Natural killer cell (primary cell): ENCODE measurements at regions of chr14 and their contacts with region 1.

Region 1: GRCh38 chr14:91649930-91650329 is 82.0 kb downstream of the CATSPERB start:
- DNase-seq: peak in 1 of 2 donors; percentile 59
- ATAC-seq: peak in 1 of 3 donors; percentile 78
- H3K4me3 ChIP-seq: no peak overlapping the region
- H3K4me3 Mint-ChIP-seq: no peak overlapping the region
- H3K27ac ChIP-seq: no peak overlapping the region
- H3K27ac Mint-ChIP-seq: no peak overlapping the region
- H3K4me1 ChIP-seq: no peaks in the 10 kb centered on the region
- H3K4me1 Mint-ChIP-seq: no peaks in the 10 kb centered on the region
- H3K27me3 ChIP-seq: no peaks in the 10 kb centered on the region
- H3K27me3 Mint-ChIP-seq: peaks cover 0 to 4% of the 10 kb centered on the region in 2 donors
- CTCF ChIP-seq: peak; percentile 48

Region 2: DNA sequence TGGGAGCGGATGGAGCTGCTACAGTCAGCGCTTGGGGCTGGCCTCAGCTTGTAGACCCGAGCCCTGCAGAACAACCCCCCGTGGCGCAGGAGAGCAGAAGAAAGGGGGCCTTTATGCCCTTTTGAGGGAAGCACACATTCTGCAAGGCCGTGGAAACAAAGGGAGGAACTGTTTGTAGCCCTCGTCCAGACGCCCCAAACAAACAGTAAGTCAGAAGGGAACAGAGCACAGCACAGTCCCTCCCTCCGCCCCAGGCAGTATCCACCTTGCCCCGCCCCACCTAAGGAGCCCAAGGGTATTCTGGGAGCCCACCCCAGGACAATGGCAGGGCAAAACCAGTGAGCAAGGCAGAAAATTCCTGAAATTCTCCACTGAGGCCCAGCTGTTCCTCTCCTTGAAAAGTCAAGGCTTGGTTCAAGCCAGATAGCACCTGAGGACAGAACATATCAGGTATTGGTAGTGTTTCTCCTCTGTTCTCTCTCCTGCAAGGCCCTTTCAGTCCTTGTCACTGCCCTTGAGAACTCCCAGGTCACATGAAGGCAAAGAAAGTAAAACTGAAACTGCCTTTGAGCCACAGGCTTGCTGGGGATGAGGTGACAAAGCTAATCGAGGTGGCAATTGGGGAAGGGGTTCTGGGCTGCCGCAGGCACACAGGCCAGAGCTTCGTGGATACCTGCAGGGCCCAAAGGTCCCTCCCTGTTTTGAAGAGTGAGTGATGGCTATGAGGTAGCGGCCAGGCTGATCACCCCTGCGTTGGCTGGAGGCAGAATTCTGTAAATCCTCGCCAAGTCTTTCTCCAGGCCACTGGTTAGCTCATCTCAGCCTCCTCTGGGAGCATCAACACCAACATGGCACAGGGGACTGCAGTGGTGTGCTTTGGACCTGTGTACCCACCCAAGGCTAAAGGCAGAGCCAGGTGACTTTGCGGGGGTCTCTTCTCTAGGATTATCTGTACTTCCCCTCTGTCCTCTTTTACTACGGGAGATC is 535.6 kb before region 1 on chr14:
- intact Hi-C with region 1: no loop called
- DNase-seq: peak; percentile 57 to 86
- ATAC-seq: peak; percentile 77 to 85 (median 82)
- H3K4me3 ChIP-seq: peak overlapping the region; percentile 70
- H3K4me3 Mint-ChIP-seq: peak overlapping the region; percentile 91
- H3K27ac ChIP-seq: peak overlapping the region; percentile 94
- H3K27ac Mint-ChIP-seq: peak overlapping the region; percentile 96
- H3K4me1 ChIP-seq: peaks cover 49% of the 10 kb centered on the region
- H3K4me1 Mint-ChIP-seq: peaks cover 70 to 77% of the 10 kb centered on the region in 2 donors
- H3K27me3 ChIP-seq: no peaks in the 10 kb centered on the region
- H3K27me3 Mint-ChIP-seq: no peaks in the 10 kb centered on the region
- CTCF ChIP-seq: no peak

Region 3: GRCh38 chr14:91614187-91614586 is 35.7 kb before region 1 on chr14:
- intact Hi-C with region 1: no loop called
- DNase-seq: no peak
- ATAC-seq: no peak
- H3K4me3 ChIP-seq: no peak overlapping the region
- H3K4me3 Mint-ChIP-seq: no peak overlapping the region
- H3K27ac ChIP-seq: no peak overlapping the region
- H3K27ac Mint-ChIP-seq: no peak overlapping the region
- H3K4me1 ChIP-seq: no peaks in the 10 kb centered on the region
- H3K4me1 Mint-ChIP-seq: no peaks in the 10 kb centered on the region
- H3K27me3 ChIP-seq: no peaks in the 10 kb centered on the region
- H3K27me3 Mint-ChIP-seq: no peaks in the 10 kb centered on the region
- CTCF ChIP-seq: no peak

Region 4: DNA sequence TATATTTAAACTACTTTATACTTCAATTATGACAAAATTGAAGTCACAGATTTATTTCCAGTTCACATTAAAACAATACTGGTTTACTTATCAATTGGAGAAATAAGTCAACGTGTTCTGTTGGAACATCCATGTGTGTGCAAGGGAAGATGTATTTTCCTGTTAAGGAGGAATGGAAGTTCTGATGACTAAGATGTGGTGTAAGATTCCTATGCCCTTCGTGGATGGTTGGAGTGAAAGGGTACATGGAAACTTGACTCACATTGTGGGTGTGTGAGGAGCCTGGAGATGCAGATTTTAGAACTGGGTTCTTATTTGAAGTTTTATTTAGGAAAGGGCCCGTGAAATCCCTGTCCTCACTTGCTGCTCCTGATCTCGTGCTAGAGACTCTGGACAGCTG is 13.3 kb before region 1 on chr14:
- intact Hi-C with region 1: no loop called
- DNase-seq: no peak
- ATAC-seq: no peak
- H3K4me3 ChIP-seq: no peak overlapping the region
- H3K4me3 Mint-ChIP-seq: no peak overlapping the region
- H3K27ac ChIP-seq: no peak overlapping the region
- H3K27ac Mint-ChIP-seq: no peak overlapping the region
- H3K4me1 ChIP-seq: no peaks in the 10 kb centered on the region
- H3K4me1 Mint-ChIP-seq: no peaks in the 10 kb centered on the region
- H3K27me3 ChIP-seq: no peaks in the 10 kb centered on the region
- H3K27me3 Mint-ChIP-seq: peaks cover 0 to 3% of the 10 kb centered on the region in 2 donors
- CTCF ChIP-seq: no peak

Region 5: DNA sequence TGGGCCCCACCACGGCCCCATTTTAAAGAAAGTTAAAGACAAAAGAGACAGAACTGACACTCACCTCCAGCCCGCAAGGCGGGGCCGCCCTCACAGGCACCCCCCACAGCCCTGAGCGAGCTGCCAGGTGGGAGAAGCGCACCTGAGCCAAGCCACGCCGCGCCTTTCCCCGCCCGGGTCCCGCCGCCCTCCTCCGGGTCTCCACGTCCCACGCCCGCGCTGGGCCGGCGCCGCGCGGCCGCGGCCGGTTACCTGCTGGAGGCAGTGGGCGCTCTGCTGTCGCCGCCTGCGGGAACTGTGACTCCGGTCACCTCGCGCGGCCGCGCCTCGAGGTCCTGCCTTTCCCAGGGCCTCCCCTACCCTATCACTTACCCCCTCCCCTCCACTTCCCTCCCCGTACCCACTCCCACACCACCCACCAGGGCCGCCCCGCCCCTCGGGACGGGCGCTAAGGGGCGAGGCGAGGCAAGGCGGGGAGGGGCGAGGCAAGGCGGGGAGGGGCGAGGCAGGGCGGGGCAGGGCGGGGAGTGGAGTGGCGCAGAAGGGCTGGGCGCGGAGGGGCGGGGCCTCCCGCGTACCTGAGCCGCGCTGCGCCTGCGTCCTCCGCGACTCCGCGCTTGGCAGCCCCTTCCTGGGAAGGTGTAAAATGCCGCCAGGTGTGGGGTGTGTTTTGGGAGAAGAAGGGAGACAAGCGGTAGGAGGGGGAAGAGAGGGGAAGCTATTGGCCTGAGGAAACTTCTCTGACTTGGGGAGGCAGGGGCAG is 186.4 kb after region 1 on chr14:
- intact Hi-C with region 1: no loop called
- DNase-seq: peak; percentile 54 to 95
- ATAC-seq: peak; percentile 78 to 97 (median 95)
- H3K4me3 ChIP-seq: peak overlapping the region; percentile 45
- H3K4me3 Mint-ChIP-seq: peak overlapping the region; percentile 88
- H3K27ac ChIP-seq: peak overlapping the region; percentile 24
- H3K27ac Mint-ChIP-seq: peak overlapping the region; percentile 15 to 80
- H3K4me1 ChIP-seq: peaks cover 12% of the 10 kb centered on the region
- H3K4me1 Mint-ChIP-seq: peaks cover 23 to 45% of the 10 kb centered on the region in 2 donors
- H3K27me3 ChIP-seq: no peaks in the 10 kb centered on the region
- H3K27me3 Mint-ChIP-seq: no peaks in the 10 kb centered on the region
- CTCF ChIP-seq: no peak

Region 6: DNA sequence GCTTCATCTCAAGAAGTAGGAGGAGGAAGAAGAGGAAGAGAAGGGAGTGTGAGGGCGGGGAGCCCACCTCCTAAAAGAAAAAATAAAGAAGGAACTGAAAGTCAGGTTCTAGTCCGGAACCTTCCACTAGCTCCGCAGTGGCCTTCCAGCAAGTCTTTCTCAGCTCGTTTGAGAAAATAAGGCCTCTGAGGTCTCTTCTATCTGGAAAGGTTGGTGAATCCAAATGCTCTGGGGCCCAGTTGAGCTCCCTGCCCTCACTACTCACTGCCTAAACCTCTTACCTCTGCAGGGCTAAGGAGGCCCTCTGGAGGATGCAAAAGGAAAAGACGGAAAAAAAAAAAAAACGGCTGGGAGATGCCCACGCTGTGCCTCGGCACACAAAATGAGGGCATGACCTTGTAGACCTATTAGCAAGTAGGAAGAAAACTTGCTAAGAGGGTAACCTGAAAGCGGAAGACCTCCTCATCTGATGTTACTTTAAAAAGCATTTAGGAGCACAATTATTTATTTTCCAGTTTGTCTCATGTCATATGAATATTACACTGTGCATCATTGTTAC is 261.6 kb after region 1 on chr14:
- intact Hi-C with region 1: loop called (anchors 1 kb)
- DNase-seq: peak in 1 of 2 donors; percentile 79
- ATAC-seq: peak; percentile 57 to 82 (median 74)
- H3K4me3 ChIP-seq: no peak overlapping the region
- H3K4me3 Mint-ChIP-seq: no peak overlapping the region
- H3K27ac ChIP-seq: no peak overlapping the region
- H3K27ac Mint-ChIP-seq: no peak overlapping the region
- H3K4me1 ChIP-seq: peaks cover 9% of the 10 kb centered on the region
- H3K4me1 Mint-ChIP-seq: peaks cover 31 to 40% of the 10 kb centered on the region in 2 donors
- H3K27me3 ChIP-seq: no peaks in the 10 kb centered on the region
- H3K27me3 Mint-ChIP-seq: no peaks in the 10 kb centered on the region
- CTCF ChIP-seq: peak; percentile 57

Region 7: GRCh38 chr14:91996948-91997371 is 347.0 kb after region 1 on chr14:
- intact Hi-C with region 1: loop called (anchors 1 kb)
- DNase-seq: peak in 1 of 2 donors; percentile 71
- ATAC-seq: peak in 2 of 3 donors; percentile 64 to 65
- H3K4me3 ChIP-seq: no peak overlapping the region
- H3K4me3 Mint-ChIP-seq: no peak overlapping the region
- H3K27ac ChIP-seq: no peak overlapping the region
- H3K27ac Mint-ChIP-seq: peak overlapping the region; percentile 69 to 84
- H3K4me1 ChIP-seq: no peaks in the 10 kb centered on the region
- H3K4me1 Mint-ChIP-seq: peaks cover 22 to 35% of the 10 kb centered on the region in 2 donors
- H3K27me3 ChIP-seq: no peaks in the 10 kb centered on the region
- H3K27me3 Mint-ChIP-seq: no peaks in the 10 kb centered on the region
- CTCF ChIP-seq: peak; percentile 66

Region 8: DNA sequence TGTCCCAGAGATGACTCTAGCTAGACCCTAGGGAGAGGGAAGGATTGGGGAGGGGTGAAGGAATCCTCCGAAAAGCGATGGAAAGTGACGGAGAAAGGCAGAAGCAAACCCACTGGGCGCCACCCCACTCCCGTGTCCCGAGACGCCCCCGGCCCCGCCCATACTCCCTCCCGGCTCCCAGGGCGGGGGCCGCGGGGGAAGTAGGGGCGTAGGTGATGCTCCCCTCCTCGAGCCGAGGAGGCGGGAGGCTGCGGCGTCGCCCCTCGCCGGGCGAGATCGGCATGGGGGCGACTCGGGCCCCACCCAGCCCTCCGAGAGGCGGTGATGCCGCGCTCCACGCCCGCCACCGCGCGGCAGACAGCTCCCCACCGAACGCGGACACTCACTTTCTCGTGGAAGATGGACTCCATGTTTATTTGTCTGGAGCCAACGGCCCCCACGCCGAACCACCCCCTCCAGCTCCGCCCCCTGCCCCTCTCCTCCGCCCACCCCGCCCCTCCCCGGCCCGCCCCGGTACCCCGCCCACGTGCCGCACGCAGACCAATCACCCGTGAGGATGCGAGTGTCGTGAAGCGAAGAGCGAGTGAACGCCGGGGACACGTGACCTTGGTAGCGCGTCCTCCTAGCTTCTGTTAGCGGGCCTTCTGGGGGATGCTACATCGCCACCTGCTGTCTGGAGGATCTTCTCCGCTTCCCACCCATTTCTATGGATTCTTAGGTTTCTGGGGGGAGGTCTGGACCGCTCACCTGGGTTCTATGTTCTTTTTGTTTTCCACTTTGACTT is 456.4 kb after region 1 on chr14 and contains the start of gene ATXN3:
- intact Hi-C with region 1: loop called (anchors 10 kb)
- DNase-seq: peak; percentile 86 to 99
- ATAC-seq: peak; percentile 91 to 98 (median 96)
- H3K4me3 ChIP-seq: peak within 1 kb of the TSS; percentile 76
- H3K4me3 Mint-ChIP-seq: peak within 1 kb of the TSS; percentile 99
- H3K27ac ChIP-seq: peak within 1 kb of the TSS; percentile 70
- H3K27ac Mint-ChIP-seq: peak within 1 kb of the TSS; percentile 88 to 91
- H3K4me1 ChIP-seq: peaks cover 17% of the 10 kb centered on the region
- H3K4me1 Mint-ChIP-seq: peaks cover 18 to 22% of the 10 kb centered on the region in 2 donors
- H3K27me3 ChIP-seq: no peaks in the 10 kb centered on the region
- H3K27me3 Mint-ChIP-seq: no peaks in the 10 kb centered on the region
- CTCF ChIP-seq: peak; percentile 74
- total RNA-seq, gene ATXN3: 26.7 to 40.5 (median 30.7) TPM